MCF 10A (cell line): ENCODE measurements at regions of chr11 and their contacts with region 1.

Region 1: DNA sequence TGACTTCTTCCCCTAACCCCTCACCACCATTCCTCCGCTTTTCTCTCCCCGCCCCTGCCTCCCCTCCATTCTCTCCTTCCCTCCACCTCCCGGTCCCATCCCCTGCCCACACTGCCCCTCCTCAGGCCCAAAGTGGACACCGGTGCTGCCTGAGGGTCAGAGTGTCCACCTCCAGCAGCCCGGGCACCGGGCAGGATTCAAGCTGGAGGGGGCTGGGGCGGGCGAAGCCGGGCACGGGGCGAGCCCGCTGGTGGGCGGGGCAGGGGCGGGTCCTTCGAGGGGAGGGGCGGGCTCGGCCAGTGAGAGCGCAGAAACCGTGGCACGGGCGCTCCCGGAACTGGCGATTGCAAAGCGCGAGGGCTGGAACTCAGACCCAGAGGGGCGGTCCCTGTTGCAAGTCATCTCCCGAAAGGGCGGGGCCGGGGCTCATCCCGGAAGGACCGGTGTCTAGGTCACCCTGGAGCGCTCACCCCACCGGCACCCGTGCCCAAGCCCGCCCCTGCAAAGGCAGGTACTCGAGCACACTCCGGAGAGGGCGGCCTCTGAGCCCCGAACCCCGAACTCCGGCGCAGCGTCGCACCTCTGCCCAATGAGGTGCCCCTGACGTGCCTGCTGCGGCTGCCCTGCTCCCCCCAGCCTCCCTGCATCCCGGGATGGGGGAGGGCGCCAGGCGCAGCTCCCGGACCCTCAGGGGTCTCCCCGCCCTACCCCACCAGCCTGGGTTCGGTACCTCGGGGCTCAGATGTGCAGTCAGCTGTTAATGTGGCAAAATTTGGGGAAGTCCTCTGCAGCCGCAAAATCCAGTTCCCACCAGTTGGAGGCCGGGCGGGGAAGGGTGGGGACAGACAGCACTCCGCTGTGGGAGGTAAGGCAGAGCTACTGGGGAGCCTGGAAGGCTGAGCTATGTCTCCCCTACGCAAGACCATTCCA is 16.5 kb upstream of the CDKN1C start:
- DNase-seq: peak; percentile 91
- H3K4me3 Mint-ChIP-seq: peak overlapping the region; percentile 47
- H3K27ac Mint-ChIP-seq: no peak overlapping the region
- H3K4me1 Mint-ChIP-seq: peaks cover 48% of the 10 kb centered on the region
- H3K27me3 Mint-ChIP-seq: no peaks in the 10 kb centered on the region
- CTCF ChIP-seq: no peak

Region 2: GRCh38 chr11:2178906-2179494 is 723.1 kb before region 1 on chr11:
- CTCF ChIA-PET with region 1: no interaction called
- POLR2A ChIA-PET with region 1: no interaction called
- intact Hi-C with region 1: loop called (anchors 5 kb)
- DNase-seq: peak; percentile 79
- H3K4me3 Mint-ChIP-seq: no peak overlapping the region
- H3K27ac Mint-ChIP-seq: peak overlapping the region; percentile 44
- H3K4me1 Mint-ChIP-seq: peaks cover 40% of the 10 kb centered on the region
- H3K27me3 Mint-ChIP-seq: no peaks in the 10 kb centered on the region
- CTCF ChIP-seq: no peak

Region 3: GRCh38 chr11:2390725-2391151 is 511.4 kb before region 1 on chr11:
- CTCF ChIA-PET with region 1: no interaction called
- POLR2A ChIA-PET with region 1: no interaction called
- intact Hi-C with region 1: no loop called
- DNase-seq: no peak
- H3K4me3 Mint-ChIP-seq: peak overlapping the region; percentile 16
- H3K27ac Mint-ChIP-seq: no peak overlapping the region
- H3K4me1 Mint-ChIP-seq: peaks cover 20% of the 10 kb centered on the region
- H3K27me3 Mint-ChIP-seq: no peaks in the 10 kb centered on the region
- CTCF ChIP-seq: no peak